Heart right ventricle (tissue), 16 donors: ENCODE measurements at regions of chr11 and their contacts with region 1.

Region 1: DNA sequence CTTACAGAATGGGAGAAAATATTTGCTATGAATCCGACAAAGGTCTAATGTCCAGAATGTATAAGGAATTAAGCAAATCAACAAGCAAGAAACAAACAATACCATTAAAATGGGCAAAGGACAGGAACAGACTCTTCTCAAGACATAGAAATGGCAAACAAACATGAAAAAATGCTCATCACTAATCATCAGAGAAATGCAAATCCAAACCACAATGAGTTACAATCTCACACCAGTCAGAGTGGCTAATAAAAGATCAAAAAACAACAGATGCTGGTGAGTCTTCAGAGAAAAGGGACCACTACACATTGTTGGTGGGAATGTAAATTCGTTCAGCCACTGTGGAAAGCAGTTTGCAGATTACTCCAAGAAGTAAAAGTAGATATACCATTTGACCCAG is 382.0 kb upstream of the ANO3 start:
- DNase-seq: no peak
- ATAC-seq: no peak
- H3K4me3 ChIP-seq: no peak overlapping the region
- H3K27ac ChIP-seq: no peak overlapping the region
- H3K4me1 ChIP-seq: no peaks in the 10 kb centered on the region
- H3K27me3 ChIP-seq: no peaks in the 10 kb centered on the region
- CTCF ChIP-seq: no peak

Region 2: GRCh38 chr11:25876456-25876965 is 73.4 kb before region 1 on chr11:
- intact Hi-C with region 1: no loop called
- DNase-seq: no peak
- ATAC-seq: no peak
- H3K4me3 ChIP-seq: no peak overlapping the region
- H3K27ac ChIP-seq: no peak overlapping the region
- H3K4me1 ChIP-seq: no peaks in the 10 kb centered on the region
- H3K27me3 ChIP-seq: no peaks in the 10 kb centered on the region
- CTCF ChIP-seq: no peak

Region 3: DNA sequence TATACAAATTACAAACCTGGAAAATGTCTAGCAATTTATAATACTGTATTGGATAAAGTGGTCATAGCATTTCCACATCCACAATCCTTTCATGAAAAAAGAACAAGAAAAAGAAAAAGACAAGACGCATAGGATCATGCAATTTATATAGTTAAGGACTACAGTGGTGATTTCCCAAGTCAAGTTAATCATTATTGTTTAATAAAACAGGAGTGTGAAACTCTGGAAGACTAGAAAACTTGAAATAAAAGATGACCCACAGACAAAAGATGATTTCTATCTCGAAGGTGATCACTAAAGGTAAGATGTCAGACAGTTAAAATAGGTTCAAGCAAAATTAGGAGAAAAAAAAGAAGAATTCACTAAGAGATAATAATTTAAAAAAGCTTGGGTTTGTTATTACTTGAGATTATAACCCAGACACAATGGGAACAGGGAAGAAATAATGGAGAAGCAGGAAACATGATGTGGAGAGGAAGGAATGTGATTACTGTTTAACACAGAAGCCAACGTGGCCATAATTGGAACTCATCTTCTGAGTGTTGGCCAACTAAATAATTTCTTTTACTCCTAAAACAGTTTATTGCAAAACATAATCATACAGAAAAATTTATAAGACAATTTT is 59.2 kb before region 1 on chr11:
- intact Hi-C with region 1: no loop called
- DNase-seq: no peak
- ATAC-seq: no peak
- H3K4me3 ChIP-seq: no peak overlapping the region
- H3K27ac ChIP-seq: no peak overlapping the region
- H3K4me1 ChIP-seq: no peaks in the 10 kb centered on the region
- H3K27me3 ChIP-seq: no peaks in the 10 kb centered on the region
- CTCF ChIP-seq: no peak

Region 4: GRCh38 chr11:25900814-25901213 is 49.1 kb before region 1 on chr11:
- intact Hi-C with region 1: no loop called
- DNase-seq: no peak
- ATAC-seq: no peak
- H3K4me3 ChIP-seq: no peak overlapping the region
- H3K27ac ChIP-seq: no peak overlapping the region
- H3K4me1 ChIP-seq: no peaks in the 10 kb centered on the region
- H3K27me3 ChIP-seq: no peaks in the 10 kb centered on the region
- CTCF ChIP-seq: no peak

Region 5: DNA sequence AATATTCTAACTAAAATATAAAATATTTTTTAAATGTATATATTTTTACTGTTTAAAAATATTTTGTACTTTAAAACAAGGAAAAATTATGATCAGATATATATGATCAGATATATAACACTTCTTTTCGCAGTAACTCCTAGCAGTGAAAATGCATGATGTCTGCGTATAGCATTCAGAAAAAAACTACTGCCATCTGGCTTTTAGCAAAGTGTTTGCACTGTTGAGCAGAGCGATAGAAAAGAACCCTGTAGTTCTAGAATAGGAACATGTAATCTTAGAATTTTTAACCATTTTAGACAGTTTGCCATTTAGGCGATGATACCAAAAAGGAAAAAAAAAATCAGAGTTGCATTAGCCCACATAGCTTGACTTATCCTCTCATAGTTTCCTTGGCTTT is 11.6 kb after region 1 on chr11:
- intact Hi-C with region 1: loop called in 1 of 10 experiments (anchors 2 kb)
- DNase-seq: no peak
- ATAC-seq: no peak
- H3K4me3 ChIP-seq: no peak overlapping the region
- H3K27ac ChIP-seq: no peak overlapping the region
- H3K4me1 ChIP-seq: no peaks in the 10 kb centered on the region
- H3K27me3 ChIP-seq: no peaks in the 10 kb centered on the region
- CTCF ChIP-seq: peak in 6 of 9 donors; percentile 12 to 41 (median 22)

Region 6: DNA sequence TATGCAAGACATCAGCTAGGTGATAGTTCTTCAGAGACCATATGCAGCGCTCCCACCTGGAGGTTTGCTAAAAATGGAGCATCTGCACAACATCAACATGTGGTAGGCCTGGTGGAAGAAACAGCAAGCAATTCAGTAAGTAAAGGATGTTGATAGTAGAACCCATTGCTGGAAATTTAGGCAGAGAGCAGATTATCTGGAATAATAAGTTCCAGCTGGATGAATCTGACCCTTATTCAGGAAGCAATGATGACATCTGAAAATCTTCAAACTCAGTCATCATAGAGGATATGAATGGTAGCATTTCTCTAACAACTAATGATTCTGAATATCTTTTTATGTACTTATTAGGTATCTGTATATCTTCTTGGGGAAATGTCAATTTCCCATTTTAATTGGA is 156.8 kb after region 1 on chr11:
- intact Hi-C with region 1: no loop called
- DNase-seq: no peak
- ATAC-seq: no peak
- H3K4me3 ChIP-seq: no peak overlapping the region
- H3K27ac ChIP-seq: no peak overlapping the region
- H3K4me1 ChIP-seq: no peaks in the 10 kb centered on the region
- H3K27me3 ChIP-seq: no peaks in the 10 kb centered on the region
- CTCF ChIP-seq: no peak